Left ventricle myocardium superior (tissue), 1 donor: ENCODE measurements at regions of chr11 and their contacts with region 1.

Region 1: GRCh38 chr11:113197443-113197842 is 116.9 kb upstream of the TTC12 start:
- DNase-seq: no peak
- ATAC-seq: no peak

Region 2: GRCh38 chr11:113113801-113114706 is 83.4 kb before region 1 on chr11:
- intact Hi-C with region 1: no loop called
- DNase-seq: peak; percentile 72
- ATAC-seq: peak; percentile 92

Region 3: DNA sequence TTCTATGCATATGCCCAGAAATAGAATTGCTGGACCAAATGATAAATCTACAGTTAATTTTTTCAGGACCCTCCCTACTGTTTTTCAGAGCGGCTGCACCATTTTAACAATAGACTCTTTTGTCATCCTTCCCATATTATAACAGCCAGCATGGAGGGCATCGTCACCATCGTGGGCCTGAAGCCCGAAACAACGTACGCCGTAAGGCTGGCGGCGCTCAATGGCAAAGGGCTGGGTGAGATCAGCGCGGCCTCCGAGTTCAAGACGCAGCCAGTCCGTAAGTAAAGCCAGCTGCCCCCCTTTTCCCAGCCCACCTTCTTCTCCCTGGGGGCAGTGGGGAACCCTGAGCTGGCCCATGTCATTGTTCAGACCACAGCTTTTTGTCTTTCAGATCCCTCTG is 37.4 kb after region 1 on chr11:
- intact Hi-C with region 1: loop called (anchors 2 kb)
- DNase-seq: no peak
- ATAC-seq: no peak